ENCODE measurements at regions of chr13 and their contacts with region 1.

Region 1: DNA sequence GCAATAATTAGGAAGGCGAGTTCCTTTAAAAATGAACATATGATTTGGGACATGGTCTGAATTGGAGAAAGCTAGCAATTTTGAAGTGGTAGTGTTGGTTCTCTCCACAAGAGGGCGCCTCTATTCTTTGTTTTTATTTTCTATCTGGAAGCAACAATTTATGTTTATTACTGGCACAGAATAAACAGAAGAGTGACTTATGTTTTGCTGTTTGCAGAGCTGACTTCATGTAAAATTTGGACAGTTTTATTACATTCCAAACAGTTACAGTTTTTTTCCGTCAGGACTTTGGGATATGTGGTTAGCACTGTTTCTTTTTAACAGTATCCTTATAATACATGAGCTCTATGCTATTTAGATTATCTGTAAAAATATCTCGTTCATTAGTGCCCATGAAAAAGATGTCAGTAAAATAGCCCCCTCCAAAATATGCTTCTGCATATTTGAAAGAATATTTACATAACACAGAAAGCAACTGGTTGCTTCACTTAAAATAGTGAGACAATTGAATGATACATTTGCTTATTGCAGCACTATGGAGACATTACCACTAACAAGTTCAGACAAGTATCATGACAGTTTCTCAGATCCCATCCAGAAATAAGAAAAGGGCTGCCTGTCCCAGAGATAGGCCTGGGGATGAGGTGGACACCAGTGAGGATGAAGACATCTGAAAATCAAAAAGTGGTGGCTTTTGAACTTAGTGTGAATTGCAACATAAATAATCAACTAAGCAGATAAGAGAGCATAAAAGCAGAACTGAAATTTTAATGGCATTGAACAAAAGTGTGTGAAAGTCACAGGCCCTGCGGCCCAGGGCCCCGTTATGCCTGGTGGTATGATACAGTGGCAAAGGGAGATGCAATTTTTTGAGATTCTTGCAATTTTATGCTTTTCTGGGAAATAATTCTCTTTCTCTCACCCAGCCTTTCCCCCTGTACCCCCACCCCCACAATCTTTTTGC is 32.3 kb upstream of the FGF9 start:
- DNase-seq: peak; percentile 43
- H3K4me3 ChIP-seq: no peak overlapping the region
- H3K27ac ChIP-seq: peak overlapping the region in 2 of 4 donors; percentile 40 to 52
- H3K4me1 ChIP-seq: peaks cover 0 to 16% (median 2%) of the 10 kb centered on the region in 4 donors
- H3K27me3 ChIP-seq: no peaks in the 10 kb centered on the region
- CTCF ChIP-seq: peak; percentile 82 to 87 (median 83)
- EP300 ChIP-seq: no peak
- POLR2A ChIP-seq: no peak

Region 2: GRCh38 chr13:22278336-22278929 is 639.8 kb after region 1 on chr13:
- in situ Hi-C with region 1: loop called (anchors 10 to 25 kb)
- intact Hi-C with region 1: loop called (anchors 10 kb)
- DNase-seq: peak; percentile 68
- H3K4me3 ChIP-seq: no peak overlapping the region
- H3K27ac ChIP-seq: no peak overlapping the region
- H3K4me1 ChIP-seq: no peaks in the 10 kb centered on the region
- H3K27me3 ChIP-seq: no peaks in the 10 kb centered on the region
- CTCF ChIP-seq: peak; percentile 41 to 52 (median 47)
- EP300 ChIP-seq: no peak
- POLR2A ChIP-seq: no peak

Region 3: GRCh38 chr13:22285867-22286266 is 647.3 kb after region 1 on chr13:
- in situ Hi-C with region 1: loop called (anchors 10 to 25 kb)
- intact Hi-C with region 1: no loop called
- DNase-seq: no peak
- H3K4me3 ChIP-seq: no peak overlapping the region
- H3K27ac ChIP-seq: no peak overlapping the region
- H3K4me1 ChIP-seq: no peaks in the 10 kb centered on the region
- H3K27me3 ChIP-seq: no peaks in the 10 kb centered on the region
- CTCF ChIP-seq: no peak
- EP300 ChIP-seq: no peak
- POLR2A ChIP-seq: no peak

Region 4: DNA sequence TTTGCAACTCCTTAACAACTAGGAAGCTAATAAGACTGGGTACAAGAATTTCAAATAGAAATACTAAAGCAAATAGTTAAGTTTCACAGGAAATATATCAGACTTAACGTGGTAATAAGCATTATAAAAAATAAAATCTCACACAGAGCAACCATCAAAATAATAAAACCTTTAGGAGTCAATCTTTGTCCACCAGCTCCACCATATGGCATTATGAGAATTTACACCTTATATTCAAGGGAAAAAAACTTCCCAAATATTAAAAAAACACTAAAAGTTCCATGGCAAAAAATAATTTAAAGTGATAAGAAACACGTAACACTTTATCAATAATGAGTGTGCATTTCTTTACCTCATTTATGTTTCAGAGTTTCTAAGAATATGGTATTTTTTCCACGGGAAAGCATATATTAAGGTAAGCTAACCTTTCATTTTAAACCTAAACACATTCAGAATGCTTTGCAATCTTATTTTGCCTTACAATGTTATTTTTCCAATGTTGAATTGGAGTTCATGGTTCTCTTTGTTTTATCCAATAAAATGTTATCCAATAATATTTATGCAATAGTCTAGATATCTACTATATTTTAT is 1119.0 kb after region 1 on chr13:
- in situ Hi-C with region 1: loop called in 1 of 4 experiments (anchors 25 kb)
- intact Hi-C with region 1: no loop called
- DNase-seq: no peak
- H3K4me3 ChIP-seq: no peak overlapping the region
- H3K27ac ChIP-seq: no peak overlapping the region
- H3K4me1 ChIP-seq: no peaks in the 10 kb centered on the region
- H3K27me3 ChIP-seq: no peaks in the 10 kb centered on the region
- CTCF ChIP-seq: peak in 2 of 5 experiments; percentile 17 to 30
- EP300 ChIP-seq: no peak
- POLR2A ChIP-seq: no peak

Region 5: DNA sequence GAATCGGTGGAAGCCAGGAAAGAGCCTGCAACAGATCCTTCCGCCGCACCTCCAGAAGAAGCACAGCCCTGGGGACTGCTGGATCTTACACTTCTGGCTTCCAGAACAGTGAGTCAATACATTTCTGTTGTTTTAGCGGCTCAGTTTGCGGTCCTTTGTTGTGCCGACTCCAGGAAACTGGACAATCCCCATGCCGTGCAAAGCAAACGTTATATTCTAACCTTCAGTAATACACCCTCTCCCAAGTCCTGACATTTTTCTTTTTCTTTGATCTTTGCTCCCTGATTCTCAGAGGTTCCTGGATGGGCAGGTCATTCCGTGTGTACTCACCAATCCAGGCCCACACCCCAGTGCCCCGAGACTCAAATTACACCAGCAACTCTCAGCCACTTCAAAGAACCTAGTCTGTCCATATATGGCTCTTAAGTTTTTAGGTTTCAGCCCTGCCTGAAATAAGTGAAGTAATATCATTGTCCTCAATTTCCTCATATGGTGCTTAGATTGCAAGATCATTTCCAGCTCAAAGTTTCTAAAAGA is 1155.1 kb after region 1 on chr13:
- in situ Hi-C with region 1: loop called in 1 of 4 experiments (anchors 25 kb)
- intact Hi-C with region 1: no loop called
- DNase-seq: no peak
- H3K4me3 ChIP-seq: no peak overlapping the region
- H3K27ac ChIP-seq: no peak overlapping the region
- H3K4me1 ChIP-seq: no peaks in the 10 kb centered on the region
- H3K27me3 ChIP-seq: peaks cover 3% of the 10 kb centered on the region
- CTCF ChIP-seq: no peak
- EP300 ChIP-seq: no peak
- POLR2A ChIP-seq: no peak